ENCODE measurements at regions of chr9 and their contacts with region 1.

Region 1: GRCh38 chr9:14353222-14354056 is 39.5 kb upstream of the NFIB start:
- DNase-seq: peak; percentile 51
- ATAC-seq: no peak
- H3K4me3 Mint-ChIP-seq: no peak overlapping the region
- H3K27ac Mint-ChIP-seq: no peak overlapping the region
- H3K4me1 Mint-ChIP-seq: peaks cover 7% of the 10 kb centered on the region
- H3K27me3 Mint-ChIP-seq: peaks cover 57% of the 10 kb centered on the region
- CTCF ChIP-seq: no peak

Region 2: DNA sequence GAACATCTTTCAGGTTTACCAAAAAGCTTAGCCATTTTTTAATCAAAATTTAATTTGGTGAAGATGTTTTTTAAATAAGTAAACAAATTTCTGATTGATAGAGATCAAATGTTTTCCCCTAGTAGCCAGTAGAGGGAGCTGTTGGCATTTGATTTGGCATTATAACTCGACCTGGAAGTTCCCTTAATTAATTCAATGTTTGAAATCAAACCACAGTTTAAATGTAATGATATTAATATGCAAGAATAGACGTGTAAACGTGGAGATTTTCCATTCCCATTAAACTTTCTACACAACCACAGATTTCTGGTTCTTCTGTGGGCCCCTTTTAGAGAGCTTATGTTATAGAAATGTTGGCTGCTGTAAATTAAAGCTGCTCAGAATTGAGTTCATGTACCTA is 925.9 kb before region 1 on chr9:
- CTCF ChIA-PET with region 1: interaction called, 53 read pairs
- POLR2A ChIA-PET with region 1: no interaction called
- intact Hi-C with region 1: no loop called
- DNase-seq: no peak
- ATAC-seq: no peak
- H3K4me3 Mint-ChIP-seq: no peak overlapping the region
- H3K27ac Mint-ChIP-seq: no peak overlapping the region
- H3K4me1 Mint-ChIP-seq: no peaks in the 10 kb centered on the region
- H3K27me3 Mint-ChIP-seq: no peaks in the 10 kb centered on the region
- CTCF ChIP-seq: no peak

Region 3: DNA sequence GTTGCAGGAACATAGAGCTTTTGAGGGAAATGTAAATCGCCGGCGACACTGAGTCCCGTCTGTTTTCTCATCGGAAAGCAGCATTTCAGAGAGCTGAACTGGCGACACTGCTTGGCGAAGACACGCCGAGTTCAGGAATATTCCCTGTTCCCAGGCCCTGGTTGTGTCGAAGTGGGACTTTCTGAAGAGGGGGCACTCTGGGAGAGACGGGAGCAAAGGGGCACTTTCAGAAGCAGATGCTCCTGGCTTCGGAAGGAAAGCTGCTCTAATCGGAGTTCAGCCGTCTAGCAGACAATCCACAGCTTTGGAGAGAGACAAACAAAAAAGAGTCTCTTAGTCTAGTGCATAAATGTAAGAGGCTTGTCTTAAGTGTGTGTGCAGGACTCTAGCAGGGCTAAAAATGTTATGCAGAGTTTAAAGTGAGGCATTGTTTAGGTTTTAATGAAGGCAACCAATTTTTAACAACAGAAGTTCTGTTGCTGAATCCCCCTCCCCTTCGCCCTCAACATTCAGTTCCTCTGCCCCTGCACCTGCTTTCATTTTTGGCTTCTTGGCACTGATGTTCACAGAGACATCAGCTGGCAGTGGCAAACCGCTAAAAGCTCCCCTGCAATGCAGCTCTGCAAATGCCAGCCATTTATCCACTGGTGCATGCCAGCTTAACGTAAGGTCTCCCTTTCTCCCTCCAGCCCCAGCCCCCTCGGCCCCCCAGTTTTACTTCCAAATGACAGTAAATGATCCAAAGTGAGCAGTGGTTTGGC is 784.4 kb before region 1 on chr9:
- CTCF ChIA-PET with region 1: no interaction called
- POLR2A ChIA-PET with region 1: no interaction called
- intact Hi-C with region 1: loop called (anchors 5 kb)
- DNase-seq: no peak
- ATAC-seq: no peak
- H3K4me3 Mint-ChIP-seq: no peak overlapping the region
- H3K27ac Mint-ChIP-seq: no peak overlapping the region
- H3K4me1 Mint-ChIP-seq: peaks cover 5% of the 10 kb centered on the region
- H3K27me3 Mint-ChIP-seq: peaks cover 5% of the 10 kb centered on the region
- CTCF ChIP-seq: no peak

Region 4: DNA sequence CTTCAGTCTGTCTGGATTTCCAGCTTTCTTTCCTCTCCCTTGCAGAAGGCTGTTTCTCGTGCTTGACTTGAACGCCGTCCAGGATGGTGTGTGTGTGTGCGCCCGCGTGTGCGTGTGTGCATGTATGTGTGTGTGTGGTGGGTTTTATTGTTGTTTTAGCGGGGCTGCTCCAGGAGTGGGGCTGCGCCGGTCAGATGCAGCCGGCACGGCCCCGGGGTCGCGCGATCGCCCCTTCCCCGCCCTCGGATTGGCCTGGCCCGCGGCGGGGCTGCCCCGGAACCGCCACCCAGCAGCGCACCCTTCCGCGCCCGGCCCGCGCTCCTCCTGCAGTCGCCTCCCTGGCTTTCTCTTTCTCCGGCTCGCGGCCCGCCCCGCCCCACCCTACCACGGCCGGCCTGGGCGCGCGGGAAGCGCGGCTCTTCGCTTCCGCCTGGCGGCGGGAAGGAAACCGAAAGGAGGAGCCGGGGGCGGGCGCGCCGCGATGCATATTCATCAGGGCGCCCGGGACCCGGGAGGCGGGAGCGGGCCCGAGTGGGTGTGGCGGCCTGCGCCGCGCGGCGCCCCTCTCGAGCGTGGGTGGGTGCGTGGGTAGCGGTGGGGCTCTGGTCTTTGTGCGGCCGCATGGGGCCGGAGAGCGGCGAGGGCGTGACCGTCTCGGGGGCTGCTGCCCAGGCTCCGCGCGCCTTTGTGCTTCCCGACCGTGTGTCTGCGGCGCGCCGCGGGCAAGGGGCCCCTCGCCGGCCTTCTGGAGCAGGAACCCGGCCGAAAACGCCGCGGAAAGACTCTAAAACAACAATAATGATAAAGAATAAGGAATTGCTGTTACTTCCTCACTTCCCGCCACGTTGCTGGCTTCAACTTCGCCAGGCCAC is 31.0 kb before region 1 on chr9:
- CTCF ChIA-PET with region 1: no interaction called
- POLR2A ChIA-PET with region 1: no interaction called
- intact Hi-C with region 1: no loop called
- DNase-seq: peak; percentile 64
- ATAC-seq: peak; percentile 91
- H3K4me3 Mint-ChIP-seq: peak overlapping the region; percentile 84
- H3K27ac Mint-ChIP-seq: peak overlapping the region; percentile 63
- H3K4me1 Mint-ChIP-seq: peaks cover 16% of the 10 kb centered on the region
- H3K27me3 Mint-ChIP-seq: peaks cover 25% of the 10 kb centered on the region
- CTCF ChIP-seq: no peak

Region 5: GRCh38 chr9:14451949-14452348 is 98.5 kb after region 1 on chr9:
- CTCF ChIA-PET with region 1: no interaction called
- POLR2A ChIA-PET with region 1: no interaction called
- intact Hi-C with region 1: no loop called
- DNase-seq: no peak
- ATAC-seq: no peak
- H3K4me3 Mint-ChIP-seq: no peak overlapping the region
- H3K27ac Mint-ChIP-seq: no peak overlapping the region
- H3K4me1 Mint-ChIP-seq: no peaks in the 10 kb centered on the region
- H3K27me3 Mint-ChIP-seq: peaks cover 8% of the 10 kb centered on the region
- CTCF ChIP-seq: no peak

Region 6: DNA sequence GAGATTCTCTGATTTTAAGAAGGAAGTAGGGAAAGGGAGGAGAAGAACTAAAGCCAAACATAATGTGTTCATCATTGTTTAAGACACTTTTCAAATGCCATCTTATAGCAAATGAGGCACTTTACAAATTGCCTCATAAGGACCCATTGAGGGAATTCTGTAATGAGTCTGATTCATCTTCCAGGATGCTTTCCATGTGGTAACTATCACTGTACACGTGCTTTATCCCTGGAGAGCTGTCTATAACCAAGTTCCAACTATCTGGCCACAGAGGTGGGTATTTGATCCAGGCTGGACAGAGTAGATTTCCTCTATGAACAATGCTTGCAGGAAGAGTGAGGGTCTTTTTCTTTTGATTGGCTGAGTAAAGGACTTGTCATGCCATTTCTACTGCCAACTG is 144.0 kb after region 1 on chr9:
- CTCF ChIA-PET with region 1: no interaction called
- POLR2A ChIA-PET with region 1: no interaction called
- intact Hi-C with region 1: no loop called
- DNase-seq: no peak
- ATAC-seq: no peak
- H3K4me3 Mint-ChIP-seq: no peak overlapping the region
- H3K27ac Mint-ChIP-seq: no peak overlapping the region
- H3K4me1 Mint-ChIP-seq: no peaks in the 10 kb centered on the region
- H3K27me3 Mint-ChIP-seq: no peaks in the 10 kb centered on the region
- CTCF ChIP-seq: no peak

Region 7: GRCh38 chr9:14561929-14562405 is 208.5 kb after region 1 on chr9:
- CTCF ChIA-PET with region 1: no interaction called
- POLR2A ChIA-PET with region 1: no interaction called
- intact Hi-C with region 1: no loop called
- DNase-seq: no peak
- ATAC-seq: no peak
- H3K4me3 Mint-ChIP-seq: no peak overlapping the region
- H3K27ac Mint-ChIP-seq: no peak overlapping the region
- H3K4me1 Mint-ChIP-seq: no peaks in the 10 kb centered on the region
- H3K27me3 Mint-ChIP-seq: no peaks in the 10 kb centered on the region
- CTCF ChIP-seq: no peak

Measured in activated B cell treated with CpG ODN at 0.5 μM for 24 hours (primary cell).